ENCODE measurements at regions of chr1 and their contacts with region 1.

Region 1: DNA sequence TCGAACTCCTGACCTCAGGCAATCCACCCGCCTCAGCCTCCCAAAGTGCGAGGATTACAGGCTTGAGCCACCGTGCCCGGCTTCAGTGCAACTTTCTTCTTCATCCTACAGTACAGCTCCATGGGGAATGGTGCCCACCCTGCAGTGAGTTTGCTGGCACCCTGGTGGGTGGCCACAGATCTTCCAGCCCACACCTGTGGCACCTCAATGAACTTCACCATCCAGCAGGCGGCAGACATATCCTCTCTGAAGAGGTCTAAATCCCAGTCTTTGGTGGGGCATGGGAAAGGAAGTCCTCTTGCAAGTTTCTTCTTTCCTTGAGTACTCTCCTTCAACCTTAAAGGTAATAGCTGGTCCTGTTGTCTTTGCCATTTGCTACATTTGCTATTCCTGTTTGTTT is 18.1 kb upstream of the ZBTB8A start:
- DNase-seq: no peak
- H3K4me3 ChIP-seq: peak overlapping the region in 3 of 7 experiments; percentile 60 to 75 (median 69)
- H3K27ac ChIP-seq: no peak overlapping the region
- H3K4me1 ChIP-seq: peaks cover 0 to 11% (median 7%) of the 10 kb centered on the region in 4 experiments
- H3K27me3 ChIP-seq: no peaks in the 10 kb centered on the region

Region 2: GRCh38 chr1:32431736-32432400 is 89.3 kb before region 1 on chr1:
- CTCF ChIA-PET with region 1: no interaction called
- POLR2A ChIA-PET with region 1: no interaction called
- DNase-seq: peak in 1 of 3 donors; percentile 8
- H3K4me3 ChIP-seq: no peak overlapping the region
- H3K27ac ChIP-seq: no peak overlapping the region
- H3K4me1 ChIP-seq: peaks cover 0 to 2% (median under 1%) of the 10 kb centered on the region in 4 experiments
- H3K27me3 ChIP-seq: peaks cover 0 to 25% (median 15%) of the 10 kb centered on the region in 5 experiments

Region 3: GRCh38 chr1:32538887-32539583 is 17.9 kb after region 1 on chr1 and contains the start of gene ZBTB8A:
- CTCF ChIA-PET with region 1: interaction called, 57 read pairs
- POLR2A ChIA-PET with region 1: interaction called, 6 read pairs
- DNase-seq: peak; percentile 54 to 87 (median 80)
- H3K4me3 ChIP-seq: peak within 1 kb of the TSS; percentile 75 to 99 (median 91)
- H3K27ac ChIP-seq: peak within 1 kb of the TSS; percentile 68 to 73
- H3K4me1 ChIP-seq: peaks cover 37 to 65% (median 56%) of the 10 kb centered on the region in 4 experiments
- H3K27me3 ChIP-seq: no peaks in the 10 kb centered on the region

Region 4: GRCh38 chr1:32612189-32612881 is 91.2 kb after region 1 on chr1:
- CTCF ChIA-PET with region 1: interaction called, 11 read pairs
- POLR2A ChIA-PET with region 1: no interaction called
- DNase-seq: peak in 2 of 3 donors; percentile 51 to 55
- H3K4me3 ChIP-seq: peak overlapping the region; percentile 40 to 86 (median 62)
- H3K27ac ChIP-seq: no peak overlapping the region
- H3K4me1 ChIP-seq: peaks cover 0 to 9% (median 7%) of the 10 kb centered on the region in 4 experiments
- H3K27me3 ChIP-seq: no peaks in the 10 kb centered on the region

Region 5: DNA sequence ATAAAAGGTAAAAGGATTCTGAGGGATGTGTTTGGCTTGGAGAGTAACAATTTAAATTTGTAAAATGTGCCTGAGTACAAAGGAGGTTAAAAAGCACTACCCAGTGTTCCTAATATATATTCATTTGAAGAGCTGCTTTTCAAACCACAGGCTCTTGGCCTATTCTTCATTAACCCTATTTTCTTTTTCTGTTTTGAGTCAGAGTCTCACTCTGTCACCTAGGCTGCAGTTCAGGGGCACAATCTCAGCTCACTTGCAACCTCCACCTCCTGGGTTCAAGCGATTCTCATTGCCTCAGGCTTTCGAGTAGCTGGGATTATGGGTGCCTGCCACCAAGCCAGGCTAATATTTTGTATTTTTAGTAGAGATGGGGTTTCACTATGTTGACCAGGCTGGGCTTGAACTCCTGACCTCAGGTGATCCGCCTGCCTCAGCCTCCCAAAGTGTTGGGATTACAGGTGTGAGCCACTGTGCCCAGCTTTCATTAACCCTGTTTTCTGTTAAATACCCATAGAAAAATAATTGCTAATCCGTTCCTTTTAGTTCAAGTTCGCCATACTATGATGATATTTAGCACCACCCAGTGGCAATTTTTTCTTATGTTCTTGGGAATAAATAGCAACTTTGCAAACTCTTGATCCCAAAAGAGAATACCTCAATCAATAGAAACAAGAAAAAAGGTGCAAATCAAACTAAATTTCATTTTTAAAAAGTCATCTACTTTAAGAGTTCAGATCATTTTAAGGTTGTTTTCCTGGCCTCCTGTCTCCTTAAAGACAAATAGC is 98.7 kb after region 1 on chr1:
- CTCF ChIA-PET with region 1: interaction called, 27 read pairs
- POLR2A ChIA-PET with region 1: no interaction called
- DNase-seq: peak; percentile 47 to 65 (median 61)
- H3K4me3 ChIP-seq: no peak overlapping the region
- H3K27ac ChIP-seq: no peak overlapping the region
- H3K4me1 ChIP-seq: peaks cover 3 to 20% (median 13%) of the 10 kb centered on the region in 4 experiments
- H3K27me3 ChIP-seq: no peaks in the 10 kb centered on the region